ENCODE measurements at regions of chr1 and their contacts with region 1.

Region 1: DNA sequence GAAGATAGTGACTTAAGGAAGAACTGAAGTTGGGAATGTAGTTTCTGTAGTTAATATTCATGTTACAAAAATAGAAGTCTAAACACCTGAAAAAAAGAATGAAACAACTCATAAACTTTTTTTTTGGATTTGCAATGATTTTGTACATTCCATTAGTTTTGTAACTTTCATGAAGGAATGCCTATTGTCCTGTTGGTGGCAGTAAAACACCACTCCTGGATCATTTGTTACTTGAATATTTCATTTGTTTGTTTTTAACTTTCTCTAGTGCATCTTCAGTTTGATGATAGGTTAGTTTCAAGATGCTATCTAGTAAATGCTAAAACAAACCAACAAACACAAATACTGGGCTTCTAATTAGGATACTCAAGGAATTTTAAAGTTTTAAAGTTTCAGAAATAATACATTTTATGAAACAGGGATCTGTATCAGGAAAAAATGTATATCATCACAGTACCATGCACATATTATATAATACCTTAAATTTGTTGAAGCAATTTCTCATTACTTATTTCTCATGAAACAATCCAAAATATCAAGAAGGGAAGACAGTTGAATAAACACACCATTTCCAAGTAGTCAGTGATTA is 229.7 kb upstream of the CACYBP start:
- DNase-seq: peak in 1 of 4 donors; percentile 38
- ATAC-seq: peak; percentile 59
- H3K4me3 ChIP-seq: no peak overlapping the region
- H3K27ac ChIP-seq: no peak overlapping the region
- H3K4me1 ChIP-seq: no peaks in the 10 kb centered on the region
- H3K27me3 ChIP-seq: no peaks in the 10 kb centered on the region
- CTCF ChIP-seq: peak; percentile 55 to 87 (median 83)
- POLR2A ChIP-seq: no peak

Region 2: GRCh38 chr1:174159252-174160108 is 610.6 kb before region 1 on chr1 and contains the start of gene RABGAP1L:
- intact Hi-C with region 1: no loop called
- DNase-seq: peak; percentile 94 to 96 (median 94)
- ATAC-seq: peak; percentile 95
- H3K4me3 ChIP-seq: peak within 1 kb of the TSS; percentile 50 to 88
- H3K27ac ChIP-seq: peak within 1 kb of the TSS; percentile 66 to 93 (median 90)
- H3K4me1 ChIP-seq: peaks cover 11% of the 10 kb centered on the region
- H3K27me3 ChIP-seq: no peaks in the 10 kb centered on the region
- CTCF ChIP-seq: peak in 1 of 7 experiments; percentile 2
- POLR2A ChIP-seq: peak; percentile 79 to 91 (median 89)
- total RNA-seq, gene RABGAP1L: 51.4 to 124 TPM

Region 3: DNA sequence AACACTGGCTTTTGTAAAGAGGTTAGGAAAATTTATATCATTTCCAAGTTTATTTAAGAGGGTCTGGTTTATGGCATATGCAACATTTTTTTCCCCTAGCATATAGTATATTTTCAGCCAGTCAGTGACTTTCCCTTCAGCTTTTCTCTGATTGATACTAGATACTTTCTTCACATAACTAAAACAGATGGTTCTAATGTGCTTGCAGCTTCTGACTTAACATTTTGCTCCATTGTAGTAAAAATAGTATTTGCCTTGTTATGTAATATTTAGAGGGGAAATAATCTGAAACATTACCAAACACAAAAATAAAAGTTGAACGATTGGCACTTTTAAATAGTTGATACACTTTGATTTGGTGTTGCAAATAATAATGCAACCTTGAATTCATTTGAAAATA is 130.6 kb before region 1 on chr1:
- intact Hi-C with region 1: no loop called
- DNase-seq: no peak
- ATAC-seq: no peak
- H3K4me3 ChIP-seq: no peak overlapping the region
- H3K27ac ChIP-seq: no peak overlapping the region
- H3K4me1 ChIP-seq: no peaks in the 10 kb centered on the region
- H3K27me3 ChIP-seq: no peaks in the 10 kb centered on the region
- CTCF ChIP-seq: no peak
- POLR2A ChIP-seq: no peak

Region 4: DNA sequence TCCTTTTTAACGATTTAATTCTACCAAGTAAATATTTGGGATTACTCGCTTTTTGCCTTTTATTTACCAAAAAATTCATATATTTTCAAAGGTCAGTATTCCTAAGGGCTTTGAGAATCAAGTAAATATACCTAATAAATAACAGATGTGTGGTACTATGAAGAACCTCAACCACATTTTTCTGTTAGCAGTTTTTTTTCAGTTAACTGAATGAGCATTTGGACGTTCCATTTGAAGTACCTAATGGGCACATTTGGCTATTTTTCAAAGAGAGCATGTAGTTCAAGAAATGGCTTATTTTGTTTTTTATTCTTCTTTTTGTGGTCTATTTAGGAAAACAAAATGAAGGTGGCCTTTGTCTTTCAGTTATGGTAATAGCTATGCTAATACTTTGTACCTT is 69.3 kb before region 1 on chr1:
- intact Hi-C with region 1: no loop called
- DNase-seq: no peak
- ATAC-seq: no peak
- H3K4me3 ChIP-seq: no peak overlapping the region
- H3K27ac ChIP-seq: no peak overlapping the region
- H3K4me1 ChIP-seq: no peaks in the 10 kb centered on the region
- H3K27me3 ChIP-seq: no peaks in the 10 kb centered on the region
- CTCF ChIP-seq: no peak
- POLR2A ChIP-seq: no peak

Region 5: GRCh38 chr1:174713796-174714195 is 56.3 kb before region 1 on chr1:
- intact Hi-C with region 1: no loop called
- DNase-seq: no peak
- ATAC-seq: no peak
- H3K4me3 ChIP-seq: no peak overlapping the region
- H3K27ac ChIP-seq: no peak overlapping the region
- H3K4me1 ChIP-seq: no peaks in the 10 kb centered on the region
- H3K27me3 ChIP-seq: no peaks in the 10 kb centered on the region
- CTCF ChIP-seq: no peak
- POLR2A ChIP-seq: no peak

Region 6: GRCh38 chr1:174982971-174983689 is 213.1 kb after region 1 on chr1:
- intact Hi-C with region 1: loop called (anchors 10 kb)
- DNase-seq: peak in 2 of 4 donors; percentile 29 to 45
- ATAC-seq: peak; percentile 27
- H3K4me3 ChIP-seq: no peak overlapping the region
- H3K27ac ChIP-seq: no peak overlapping the region
- H3K4me1 ChIP-seq: no peaks in the 10 kb centered on the region
- H3K27me3 ChIP-seq: no peaks in the 10 kb centered on the region
- CTCF ChIP-seq: peak; percentile 25 to 58 (median 55)
- POLR2A ChIP-seq: no peak